ENCODE measurements at regions of chr11 and their contacts with region 1.

Region 1: DNA sequence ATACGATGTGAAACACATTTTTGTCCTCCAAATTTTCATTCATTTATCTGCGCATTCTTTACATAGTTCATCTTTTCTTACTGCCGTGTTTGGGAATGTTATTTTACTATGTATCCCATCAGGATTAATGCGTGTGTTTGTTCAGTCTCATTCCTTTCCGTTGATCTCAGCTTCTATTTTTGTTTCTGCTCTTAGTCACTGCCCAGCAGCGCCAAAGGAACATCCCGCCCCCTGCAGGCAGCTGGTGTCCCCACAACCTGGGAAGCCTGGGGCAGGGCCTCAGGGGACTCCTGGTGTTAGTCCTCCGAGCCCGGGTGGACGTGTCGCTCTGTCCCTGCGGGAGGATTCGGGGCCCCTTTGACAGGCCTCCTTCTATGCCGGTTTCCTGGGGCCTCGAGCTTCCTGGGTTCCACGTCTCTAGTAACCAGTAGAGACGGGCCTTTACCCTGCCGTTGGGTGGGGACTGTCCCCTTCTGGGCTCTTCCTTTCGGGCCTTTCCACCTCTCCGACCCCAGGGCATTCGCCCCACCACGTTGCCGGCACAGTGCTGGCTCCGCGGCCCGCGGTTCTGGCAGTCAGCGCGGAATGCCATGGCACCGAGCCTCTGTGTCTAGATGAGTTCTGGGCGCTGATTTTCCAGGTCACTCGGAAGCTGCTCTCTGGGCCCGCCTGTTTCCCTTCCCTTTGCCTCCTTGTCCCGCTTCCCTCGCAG is 39.8 kb downstream of the WEE1 start:
- DNase-seq: peak; percentile 79 to 97
- H3K4me3 ChIP-seq: peak overlapping the region; percentile 68 to 73
- H3K27ac ChIP-seq: peak overlapping the region; percentile 98 to 99
- H3K4me1 ChIP-seq: peaks cover 2 to 23% of the 10 kb centered on the region in 2 donors
- H3K27me3 ChIP-seq: no peaks in the 10 kb centered on the region
- CTCF ChIP-seq: peak; percentile 91 to 95 (median 92)

Region 2: GRCh38 chr11:9534791-9535781 is 78.2 kb before region 1 on chr11:
- intact Hi-C with region 1: loop called (anchors 5 kb)
- DNase-seq: peak; percentile 19 to 89
- H3K4me3 ChIP-seq: no peak overlapping the region
- H3K27ac ChIP-seq: peak overlapping the region; percentile 50 to 65
- H3K4me1 ChIP-seq: peaks cover 0 to 22% of the 10 kb centered on the region in 2 donors
- H3K27me3 ChIP-seq: no peaks in the 10 kb centered on the region
- CTCF ChIP-seq: peak; percentile 55 to 64 (median 57)

Region 3: GRCh38 chr11:9573052-9573774 is 40.1 kb before region 1 on chr11 and contains the start of gene WEE1:
- intact Hi-C with region 1: loop called (anchors 2 kb)
- DNase-seq: peak; percentile 95 to 99
- H3K4me3 ChIP-seq: peak within 1 kb of the TSS; percentile 89 to 98
- H3K27ac ChIP-seq: peak within 1 kb of the TSS; percentile 93 to 98
- H3K4me1 ChIP-seq: peaks cover 16 to 27% of the 10 kb centered on the region in 2 donors
- H3K27me3 ChIP-seq: no peaks in the 10 kb centered on the region
- CTCF ChIP-seq: no peak
- total RNA-seq, gene WEE1: 20.8 TPM

Region 4: DNA sequence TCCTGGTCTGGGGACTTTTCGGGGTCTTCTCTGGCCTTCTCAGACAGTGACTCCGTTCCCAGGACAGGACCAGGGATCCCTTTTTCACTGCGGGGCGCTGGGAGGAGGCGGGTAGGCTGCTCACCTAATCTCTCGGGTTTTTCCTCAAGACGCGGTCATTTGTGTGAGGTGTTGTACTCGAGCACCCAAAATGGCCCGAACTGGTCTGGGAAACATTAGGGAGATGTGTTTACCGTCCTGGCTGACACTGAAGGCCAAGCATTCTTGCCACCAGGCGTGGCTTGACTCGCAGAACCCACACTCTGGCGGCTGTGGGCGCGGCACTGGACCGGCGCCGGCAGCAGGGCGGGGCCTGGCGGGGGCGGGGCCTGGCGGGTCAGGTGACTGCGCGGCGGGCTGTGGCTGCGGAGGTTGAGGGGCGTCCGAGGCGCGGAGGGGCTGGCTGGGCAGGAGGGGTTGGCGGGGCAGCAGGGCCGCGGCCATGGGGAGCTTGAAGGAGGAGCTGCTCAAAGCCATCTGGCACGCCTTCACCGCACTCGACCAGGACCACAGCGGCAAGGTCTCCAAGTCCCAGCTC is 50.5 kb after region 1 on chr11 and contains the start of gene SWAP70:
- intact Hi-C with region 1: loop called (anchors 2 kb)
- DNase-seq: peak; percentile 67 to 96
- H3K4me3 ChIP-seq: peak within 1 kb of the TSS; percentile 74 to 92
- H3K27ac ChIP-seq: peak within 1 kb of the TSS; percentile 95 to 97
- H3K4me1 ChIP-seq: peaks cover 0 to 2% of the 10 kb centered on the region in 2 donors
- H3K27me3 ChIP-seq: no peaks in the 10 kb centered on the region
- CTCF ChIP-seq: peak; percentile 43 to 79 (median 62)
- total RNA-seq, gene SWAP70: 40.1 TPM

Region 5: GRCh38 chr11:9748361-9748970 is 135.2 kb after region 1 on chr11:
- intact Hi-C with region 1: loop called (anchors 1 kb)
- DNase-seq: peak in 1 of 2 donors; percentile 80
- H3K4me3 ChIP-seq: no peak overlapping the region
- H3K27ac ChIP-seq: peak overlapping the region; percentile 15 to 31
- H3K4me1 ChIP-seq: peaks cover 3 to 8% of the 10 kb centered on the region in 2 donors
- H3K27me3 ChIP-seq: no peaks in the 10 kb centered on the region
- CTCF ChIP-seq: peak; percentile 76 to 88 (median 80)

Region 6: GRCh38 chr11:9972989-9973388 is 359.7 kb after region 1 on chr11:
- intact Hi-C with region 1: loop called (anchors 10 kb)
- DNase-seq: no peak
- H3K4me3 ChIP-seq: no peak overlapping the region
- H3K27ac ChIP-seq: no peak overlapping the region
- H3K4me1 ChIP-seq: no peaks in the 10 kb centered on the region
- H3K27me3 ChIP-seq: no peaks in the 10 kb centered on the region
- CTCF ChIP-seq: peak; percentile 42 to 78 (median 64)

Measured in ascending aorta (tissue), 2 donors.